AG04450 (cell line): ENCODE measurements at regions of chr4 and their contacts with region 1.

Region 1: DNA sequence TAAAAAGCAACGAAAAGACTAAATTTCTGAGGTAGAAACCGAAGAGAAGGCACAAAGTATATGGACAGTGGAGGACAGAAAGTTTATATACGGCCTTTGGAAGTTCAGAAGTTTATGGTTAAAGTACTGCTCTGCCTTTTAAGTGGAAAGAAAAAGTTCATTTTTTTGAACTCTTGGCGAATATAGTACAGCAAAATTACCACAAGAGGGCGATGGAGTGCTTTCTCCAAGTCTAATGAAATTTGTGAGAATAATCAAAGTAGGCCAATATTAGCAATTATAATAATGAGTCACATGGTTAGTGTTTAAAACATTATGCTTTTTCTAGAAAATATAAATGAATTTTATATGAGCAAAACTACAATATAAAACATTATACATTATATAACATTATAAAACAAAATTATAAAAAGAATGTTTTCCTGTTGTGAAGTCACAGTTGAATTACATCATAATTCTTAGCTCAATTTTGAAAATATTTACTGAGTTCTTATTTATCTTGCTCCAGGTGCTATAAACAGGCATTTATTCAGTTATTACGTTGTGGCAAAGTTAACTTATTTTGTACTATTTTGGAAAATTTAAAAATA is 136.2 kb upstream of the BMPR1B start:
- DNase-seq: no peak
- H3K4me3 ChIP-seq: no peak overlapping the region
- H3K27ac ChIP-seq: no peak overlapping the region
- H3K27me3 ChIP-seq: no peaks in the 10 kb centered on the region
- CTCF ChIP-seq: peak; percentile 86

Region 2: GRCh38 chr4:94534401-94535312 is 86.9 kb before region 1 on chr4:
- CTCF ChIA-PET with region 1: no interaction called
- POLR2A ChIA-PET with region 1: no interaction called
- DNase-seq: no peak
- H3K4me3 ChIP-seq: no peak overlapping the region
- H3K27ac ChIP-seq: no peak overlapping the region
- H3K27me3 ChIP-seq: no peaks in the 10 kb centered on the region
- CTCF ChIP-seq: no peak

Region 3: GRCh38 chr4:94590493-94590892 is 31.1 kb before region 1 on chr4:
- CTCF ChIA-PET with region 1: no interaction called
- POLR2A ChIA-PET with region 1: no interaction called
- DNase-seq: no peak
- H3K4me3 ChIP-seq: no peak overlapping the region
- H3K27ac ChIP-seq: no peak overlapping the region
- H3K27me3 ChIP-seq: no peaks in the 10 kb centered on the region
- CTCF ChIP-seq: no peak

Region 4: DNA sequence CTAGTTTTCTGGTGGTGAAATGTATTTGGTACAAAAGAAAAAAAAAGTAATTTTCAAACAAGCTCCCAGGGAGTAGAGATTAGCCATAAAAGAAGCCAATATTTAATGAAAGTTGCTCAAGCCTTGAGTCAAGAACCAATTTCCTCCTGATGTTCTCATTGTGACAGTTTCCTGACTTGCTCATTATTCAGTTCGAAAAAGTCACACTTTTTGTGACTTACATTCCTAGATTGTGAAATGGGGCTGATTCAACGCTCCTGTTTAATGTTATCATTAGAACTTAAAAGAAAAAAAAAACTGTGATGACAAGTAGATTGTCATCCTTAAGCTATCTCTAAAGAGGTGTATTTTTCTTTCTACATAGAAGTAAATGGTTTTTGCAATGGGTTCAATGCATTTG is 13.6 kb after region 1 on chr4:
- CTCF ChIA-PET with region 1: interaction called, 16 read pairs
- POLR2A ChIA-PET with region 1: no interaction called
- DNase-seq: no peak
- H3K4me3 ChIP-seq: no peak overlapping the region
- H3K27ac ChIP-seq: no peak overlapping the region
- H3K27me3 ChIP-seq: no peaks in the 10 kb centered on the region
- CTCF ChIP-seq: no peak

Region 5: DNA sequence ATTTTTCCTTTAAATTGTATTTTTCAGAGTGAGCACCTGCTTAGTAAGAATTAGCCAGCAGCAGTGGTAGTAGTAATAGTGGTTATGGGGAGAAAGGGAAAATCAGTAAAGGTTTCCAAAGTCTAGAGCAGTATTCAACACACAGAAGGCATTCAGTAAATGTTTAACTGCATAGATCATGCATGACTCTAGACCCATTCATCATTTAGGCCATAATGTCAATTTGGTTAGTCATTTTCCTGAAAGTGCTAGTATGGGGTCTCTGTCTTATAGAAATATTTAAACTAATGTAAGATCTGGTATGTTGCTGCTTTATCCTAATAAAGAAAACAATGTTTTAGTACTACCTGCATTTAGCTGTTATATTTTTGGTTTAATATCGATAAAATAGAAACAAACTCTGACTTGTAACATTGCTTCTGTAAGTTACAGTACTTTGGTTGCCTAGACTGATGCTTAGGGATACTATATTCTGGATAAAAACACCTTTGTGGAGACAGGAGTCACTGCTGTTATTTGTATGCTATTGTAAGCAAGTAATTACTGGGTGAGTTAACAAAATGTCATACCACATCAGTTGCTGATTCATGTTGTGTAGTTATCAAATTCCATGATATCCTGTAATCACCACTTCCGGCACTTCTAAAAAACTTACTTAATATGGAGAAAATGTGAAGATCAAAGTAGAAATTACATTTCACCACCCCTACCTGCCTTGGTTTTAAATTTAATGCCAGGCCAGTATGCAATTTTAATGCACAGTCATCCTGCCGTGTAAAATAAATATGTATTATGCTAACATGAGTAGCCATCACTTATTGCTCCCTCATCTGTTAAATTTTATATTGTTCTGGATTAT is 20.3 kb after region 1 on chr4:
- CTCF ChIA-PET with region 1: interaction called, 16 read pairs
- POLR2A ChIA-PET with region 1: no interaction called
- DNase-seq: no peak
- H3K4me3 ChIP-seq: no peak overlapping the region
- H3K27ac ChIP-seq: no peak overlapping the region
- H3K27me3 ChIP-seq: no peaks in the 10 kb centered on the region
- CTCF ChIP-seq: no peak

Region 6: DNA sequence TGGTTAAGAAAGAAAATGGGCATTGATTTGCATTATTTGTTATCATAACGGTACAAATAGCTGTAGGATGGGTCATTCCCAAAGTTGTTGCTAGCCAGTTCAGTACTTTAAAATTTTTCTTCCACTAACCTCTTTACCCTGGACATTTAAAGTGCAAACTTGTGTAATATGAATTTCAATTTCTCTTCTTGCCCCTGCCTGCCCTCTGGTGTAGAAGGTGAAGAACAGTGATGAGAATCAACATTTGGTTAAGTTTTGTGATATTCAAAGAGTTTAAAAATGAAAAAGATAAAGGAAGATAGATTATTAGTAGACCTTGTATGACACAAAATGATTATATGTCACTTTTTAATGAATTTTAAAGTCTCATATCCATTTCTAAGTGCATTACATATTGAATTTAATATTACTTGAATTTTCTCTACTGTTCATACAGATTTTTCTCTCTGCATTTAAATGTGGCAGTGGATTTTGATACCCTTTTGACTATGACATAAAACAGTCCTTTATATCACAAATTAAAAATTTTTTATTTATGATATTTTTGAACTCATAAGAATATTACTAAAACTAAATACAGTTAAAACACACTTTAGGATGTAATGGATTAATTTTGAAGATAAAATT is 473.9 kb after region 1 on chr4:
- CTCF ChIA-PET with region 1: interaction called, 83 read pairs
- POLR2A ChIA-PET with region 1: no interaction called
- DNase-seq: no peak
- H3K4me3 ChIP-seq: no peak overlapping the region
- H3K27ac ChIP-seq: no peak overlapping the region
- H3K27me3 ChIP-seq: no peaks in the 10 kb centered on the region
- CTCF ChIP-seq: peak; percentile 73

Region 7: GRCh38 chr4:95124906-95125504 is 503.4 kb after region 1 on chr4:
- CTCF ChIA-PET with region 1: interaction called, 118 read pairs
- POLR2A ChIA-PET with region 1: no interaction called
- DNase-seq: peak; percentile 39
- H3K4me3 ChIP-seq: no peak overlapping the region
- H3K27ac ChIP-seq: no peak overlapping the region
- H3K27me3 ChIP-seq: no peaks in the 10 kb centered on the region
- CTCF ChIP-seq: peak; percentile 76